IMR-90 (cell line): ENCODE measurements at regions of chr5 and their contacts with region 1.

Region 1: GRCh38 chr5:69334793-69335268 is 2.2 kb upstream of the CCDC125 start:
- DNase-seq: peak; percentile 76
- ATAC-seq: peak; percentile 95
- H3K4me3 ChIP-seq: no peak overlapping the region
- H3K27ac ChIP-seq: no peak overlapping the region
- H3K4me1 ChIP-seq: peaks cover 3% of the 10 kb centered on the region
- H3K27me3 ChIP-seq: no peaks in the 10 kb centered on the region
- CTCF ChIP-seq: peak; percentile 86
- POLR2A ChIP-seq: no peak
- RAD21 ChIP-seq: peak; percentile 77

Region 2: GRCh38 chr5:69042915-69043658 is 291.7 kb before region 1 on chr5:
- CTCF ChIA-PET with region 1: no interaction called
- POLR2A ChIA-PET with region 1: no interaction called
- dilution Hi-C with region 1: no loop called
- in situ Hi-C with region 1: no loop called
- intact Hi-C with region 1: loop called (anchors 1 kb)
- DNase-seq: peak; percentile 93
- ATAC-seq: peak; percentile 96
- H3K4me3 ChIP-seq: peak overlapping the region; percentile 53
- H3K27ac ChIP-seq: peak overlapping the region; percentile 28; the same call in 1 of the 2 replicates
- H3K4me1 ChIP-seq: no peaks in the 10 kb centered on the region
- H3K27me3 ChIP-seq: no peaks in the 10 kb centered on the region; the same call in 1 of the 2 replicates
- CTCF ChIP-seq: peak; percentile 90
- POLR2A ChIP-seq: no peak
- RAD21 ChIP-seq: peak; percentile 88

Region 3: DNA sequence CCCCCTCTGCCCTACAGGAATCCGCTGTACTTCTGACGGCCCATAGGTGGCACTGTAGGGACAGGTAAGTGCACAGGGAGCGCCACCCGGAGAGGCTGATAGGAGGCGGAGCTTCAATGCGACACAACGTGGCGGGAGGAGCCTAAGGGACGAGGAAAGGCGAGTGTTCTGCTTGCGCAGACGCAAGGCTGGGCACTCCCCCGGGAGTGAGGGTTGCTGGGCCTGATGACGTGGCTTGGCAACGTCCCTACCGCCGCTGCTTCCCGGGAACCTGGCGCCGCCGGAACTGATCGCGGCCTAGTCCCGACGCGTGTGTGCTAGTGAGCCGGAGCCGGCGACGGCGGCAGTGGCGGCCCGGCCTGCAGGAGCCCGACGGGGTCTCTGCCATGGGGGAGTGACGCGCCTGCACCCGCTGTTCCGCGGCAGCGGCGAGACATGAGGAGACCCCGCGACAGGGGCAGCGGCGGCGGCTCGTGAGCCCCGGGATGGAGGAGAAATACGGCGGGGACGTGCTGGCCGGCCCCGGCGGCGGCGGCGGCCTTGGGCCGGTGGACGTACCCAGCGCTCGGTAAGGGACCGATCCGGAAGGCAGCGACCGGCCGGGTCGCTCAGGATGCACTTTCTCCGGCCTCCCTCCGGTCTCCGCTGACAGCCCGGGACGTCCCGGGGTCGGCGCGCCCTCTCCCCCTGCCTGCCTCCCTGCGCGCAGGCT is 240.9 kb before region 1 on chr5 and contains the start of gene SLC30A5:
- CTCF ChIA-PET with region 1: interaction called, 6 read pairs
- POLR2A ChIA-PET with region 1: interaction called, 7 read pairs
- dilution Hi-C with region 1: no loop called
- in situ Hi-C with region 1: no loop called
- intact Hi-C with region 1: loop called (anchors 2 kb)
- DNase-seq: peak; percentile 100
- ATAC-seq: peak; percentile 100
- H3K4me3 ChIP-seq: peak within 1 kb of the TSS; percentile 55
- H3K27ac ChIP-seq: peak within 1 kb of the TSS; percentile 64
- H3K4me1 ChIP-seq: peaks cover 3% of the 10 kb centered on the region; the same call in 1 of the 2 replicates
- H3K27me3 ChIP-seq: no peaks in the 10 kb centered on the region
- CTCF ChIP-seq: peak; percentile 95
- POLR2A ChIP-seq: peak; percentile 97
- RAD21 ChIP-seq: peak; percentile 93
- total RNA-seq, gene SLC30A5: 34.8 and 63.3 TPM in 2 replicates

Region 4: DNA sequence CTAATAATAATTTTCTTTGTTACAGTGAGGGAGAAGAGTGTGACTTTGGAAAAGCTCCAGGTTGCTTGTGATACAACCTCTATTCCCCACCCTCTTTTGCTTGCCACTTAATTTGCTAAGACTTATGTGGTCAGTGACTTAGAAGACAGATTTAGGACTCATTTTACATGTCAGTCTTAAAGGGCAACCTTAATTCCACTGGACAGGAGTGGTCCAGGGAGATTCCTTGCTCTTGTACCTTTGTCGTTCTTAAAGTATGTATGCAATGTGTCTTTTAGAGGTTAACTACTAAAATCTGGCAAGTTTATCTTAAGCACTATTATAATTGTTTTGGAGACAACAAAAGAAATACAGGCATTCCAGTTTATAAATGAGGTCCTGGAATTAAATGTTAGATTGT is 221.0 kb before region 1 on chr5:
- CTCF ChIA-PET with region 1: no interaction called
- POLR2A ChIA-PET with region 1: no interaction called
- dilution Hi-C with region 1: no loop called
- in situ Hi-C with region 1: loop called (anchors 10 kb)
- intact Hi-C with region 1: no loop called
- DNase-seq: no peak
- ATAC-seq: no peak
- H3K4me3 ChIP-seq: no peak overlapping the region
- H3K27ac ChIP-seq: no peak overlapping the region
- H3K4me1 ChIP-seq: no peaks in the 10 kb centered on the region
- H3K27me3 ChIP-seq: no peaks in the 10 kb centered on the region
- CTCF ChIP-seq: no peak
- POLR2A ChIP-seq: no peak
- RAD21 ChIP-seq: no peak

Region 5: DNA sequence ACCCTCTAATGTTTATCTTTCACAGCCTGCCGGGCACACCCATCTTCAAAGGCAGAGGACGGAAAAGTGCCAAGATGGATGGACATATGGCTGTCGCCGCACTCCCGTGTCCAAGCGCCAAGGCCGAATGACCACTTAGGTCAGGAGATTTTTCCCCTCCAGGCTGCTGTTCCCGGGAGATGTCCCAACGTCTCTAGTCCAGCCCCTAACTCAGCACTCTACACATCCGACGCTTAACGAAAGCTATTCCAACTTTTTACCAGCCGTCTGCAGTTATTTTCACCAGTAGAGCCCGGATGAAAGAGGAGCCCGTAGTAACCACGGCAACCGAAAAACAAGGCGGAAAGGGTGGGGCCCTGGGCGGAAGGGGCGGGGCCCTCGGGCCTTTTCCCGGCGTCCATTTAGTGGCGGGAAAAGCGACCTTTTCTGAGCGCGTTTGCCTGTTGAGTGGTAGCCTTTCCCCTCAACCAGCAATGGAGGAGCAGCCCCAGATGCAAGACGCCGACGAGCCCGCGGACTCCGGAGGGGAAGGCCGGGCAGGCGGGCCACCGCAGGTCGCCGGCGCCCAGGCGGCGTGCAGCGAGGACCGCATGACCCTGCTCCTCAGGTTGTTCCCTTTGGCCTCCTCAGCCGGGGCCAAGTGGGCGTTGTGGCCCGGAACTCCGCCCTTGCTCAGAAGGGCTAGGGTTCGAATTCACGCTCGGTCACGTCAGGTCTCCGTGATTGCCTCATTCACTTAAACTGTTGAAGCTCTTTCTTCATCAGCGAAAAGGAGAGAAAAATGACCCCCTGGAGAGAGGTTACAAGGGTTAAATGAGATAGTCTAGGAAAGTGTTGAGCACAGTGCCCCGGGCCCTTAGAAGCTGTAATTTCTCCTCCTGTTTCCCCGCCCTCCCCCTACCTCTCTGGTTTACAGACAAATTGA is 145.4 kb before region 1 on chr5 and contains the start of gene CENPH:
- CTCF ChIA-PET with region 1: interaction called, 3 read pairs
- POLR2A ChIA-PET with region 1: no interaction called
- dilution Hi-C with region 1: no loop called
- in situ Hi-C with region 1: no loop called
- intact Hi-C with region 1: loop called (anchors 5 kb)
- DNase-seq: peak; percentile 88
- ATAC-seq: peak; percentile 94
- H3K4me3 ChIP-seq: peak within 1 kb of the TSS; percentile 59
- H3K27ac ChIP-seq: peak within 1 kb of the TSS; percentile 79
- H3K4me1 ChIP-seq: no peaks in the 10 kb centered on the region
- H3K27me3 ChIP-seq: no peaks in the 10 kb centered on the region
- CTCF ChIP-seq: no peak
- POLR2A ChIP-seq: peak; percentile 80
- RAD21 ChIP-seq: no peak
- total RNA-seq, gene CENPH: 3.8 and 10.8 TPM in 2 replicates

Region 6: GRCh38 chr5:69234457-69235268 is 100.2 kb before region 1 on chr5 and contains the start of gene CDK7:
- CTCF ChIA-PET with region 1: no interaction called
- POLR2A ChIA-PET with region 1: no interaction called
- dilution Hi-C with region 1: no loop called
- in situ Hi-C with region 1: no loop called
- intact Hi-C with region 1: loop called (anchors 5 kb)
- DNase-seq: peak; percentile 91
- ATAC-seq: peak; percentile 91
- H3K4me3 ChIP-seq: peak within 1 kb of the TSS; percentile 73
- H3K27ac ChIP-seq: peak within 1 kb of the TSS; percentile 77
- H3K4me1 ChIP-seq: peaks cover 9% of the 10 kb centered on the region
- H3K27me3 ChIP-seq: no peaks in the 10 kb centered on the region
- CTCF ChIP-seq: no peak
- POLR2A ChIP-seq: peak; percentile 77
- RAD21 ChIP-seq: no peak
- total RNA-seq, gene CDK7: 65.6 and 114 TPM in 2 replicates

Region 7: GRCh38 chr5:69454460-69455249 is 119.8 kb after region 1 on chr5:
- CTCF ChIA-PET with region 1: no interaction called
- POLR2A ChIA-PET with region 1: no interaction called
- dilution Hi-C with region 1: no loop called
- in situ Hi-C with region 1: no loop called
- intact Hi-C with region 1: no loop called
- DNase-seq: no peak
- ATAC-seq: no peak
- H3K4me3 ChIP-seq: no peak overlapping the region
- H3K27ac ChIP-seq: no peak overlapping the region
- H3K4me1 ChIP-seq: no peaks in the 10 kb centered on the region
- H3K27me3 ChIP-seq: peaks cover 1% of the 10 kb centered on the region; the same call in 1 of the 2 replicates
- CTCF ChIP-seq: no peak
- POLR2A ChIP-seq: no peak
- RAD21 ChIP-seq: no peak